K562 (cell line): ENCODE measurements at regions of chr1 and their contacts with region 1.

Region 1: DNA sequence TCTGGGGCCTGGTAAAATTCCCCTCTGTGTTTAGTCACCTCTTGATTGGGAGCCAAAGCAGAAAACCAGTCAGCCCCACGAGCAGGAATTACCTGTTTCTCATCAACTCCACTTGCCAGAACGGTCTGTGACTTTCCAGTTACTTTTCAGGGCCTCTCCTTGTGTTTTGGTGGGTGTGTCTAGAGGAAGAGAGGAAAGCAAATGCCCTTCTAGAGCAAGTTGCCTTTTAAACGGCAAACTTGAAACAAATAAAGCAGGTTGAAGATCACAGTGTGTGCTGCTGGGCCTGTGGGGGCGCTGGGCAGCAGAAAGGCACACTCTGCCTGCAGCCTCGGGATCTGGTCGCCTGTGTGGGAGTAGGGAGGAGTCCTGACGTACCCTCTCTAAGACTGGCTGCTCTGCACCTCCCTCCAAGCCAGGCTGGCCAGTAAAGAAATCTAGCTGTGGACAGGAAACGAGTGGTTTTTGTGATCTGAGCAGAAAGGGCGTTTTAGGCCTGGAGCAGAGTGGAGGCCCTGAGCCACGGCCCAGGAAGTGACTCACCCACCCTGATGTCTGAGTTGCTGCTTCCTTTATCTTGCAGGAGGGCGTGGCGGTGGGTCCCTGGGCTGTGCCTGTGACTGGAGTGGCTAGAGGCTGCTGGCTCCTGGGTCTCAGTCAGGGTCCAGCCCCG is 11.1 kb upstream of the S100A11 start:
- DNase-seq: peak; percentile 85 to 97 (median 88)
- ATAC-seq: peak; percentile 96
- H3K4me3 ChIP-seq: peak overlapping the region; percentile 32
- H3K27ac ChIP-seq: peak overlapping the region; percentile 97
- H3K4me1 ChIP-seq: peaks cover 14 to 19% of the 10 kb centered on the region in 2 experiments
- H3K27me3 ChIP-seq: peaks cover 0 to 3% of the 10 kb centered on the region in 2 experiments; a peak in 1 of 5 replicates
- CTCF ChIP-seq: peak; percentile 73 to 88 (median 76)
- EP300 ChIP-seq: peak; percentile 76
- POLR2A ChIP-seq: peak; percentile 91
- RAD21 ChIP-seq: peak in 1 of 2 experiments; percentile 7; a peak in 1 of 4 replicates

Region 2: DNA sequence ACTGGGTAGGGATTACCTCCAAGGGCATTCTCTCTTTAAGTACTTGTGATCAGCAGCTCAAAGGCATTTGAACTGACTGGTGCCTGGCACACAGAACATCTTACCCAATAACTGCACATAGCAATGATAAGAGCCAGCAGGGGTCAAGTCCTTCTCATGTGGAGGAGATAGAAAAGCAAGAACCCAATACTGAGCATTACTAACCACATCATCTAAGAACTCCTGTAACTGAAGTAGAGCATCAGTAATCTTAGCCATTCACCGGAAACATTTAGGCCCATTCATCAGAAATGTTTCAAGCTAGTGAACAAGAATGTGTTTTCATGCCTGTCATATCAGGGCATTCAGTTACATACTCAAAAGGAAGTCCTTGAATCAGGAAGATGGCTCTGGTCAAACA is 105.0 kb before region 1 on chr1:
- CTCF ChIA-PET with region 1: no interaction called
- POLR2A ChIA-PET with region 1: no interaction called
- in situ Hi-C with region 1: no loop called
- intact Hi-C with region 1: no loop called
- DNase-seq: no peak
- ATAC-seq: no peak
- H3K4me3 ChIP-seq: no peak overlapping the region
- H3K27ac ChIP-seq: no peak overlapping the region
- H3K4me1 ChIP-seq: peaks cover 3 to 27% of the 10 kb centered on the region in 2 experiments; a peak in 4 of 5 replicates
- H3K27me3 ChIP-seq: no peaks in the 10 kb centered on the region; a peak in 1 of 5 replicates
- CTCF ChIP-seq: no peak
- EP300 ChIP-seq: no peak
- POLR2A ChIP-seq: no peak
- RAD21 ChIP-seq: no peak

Region 3: DNA sequence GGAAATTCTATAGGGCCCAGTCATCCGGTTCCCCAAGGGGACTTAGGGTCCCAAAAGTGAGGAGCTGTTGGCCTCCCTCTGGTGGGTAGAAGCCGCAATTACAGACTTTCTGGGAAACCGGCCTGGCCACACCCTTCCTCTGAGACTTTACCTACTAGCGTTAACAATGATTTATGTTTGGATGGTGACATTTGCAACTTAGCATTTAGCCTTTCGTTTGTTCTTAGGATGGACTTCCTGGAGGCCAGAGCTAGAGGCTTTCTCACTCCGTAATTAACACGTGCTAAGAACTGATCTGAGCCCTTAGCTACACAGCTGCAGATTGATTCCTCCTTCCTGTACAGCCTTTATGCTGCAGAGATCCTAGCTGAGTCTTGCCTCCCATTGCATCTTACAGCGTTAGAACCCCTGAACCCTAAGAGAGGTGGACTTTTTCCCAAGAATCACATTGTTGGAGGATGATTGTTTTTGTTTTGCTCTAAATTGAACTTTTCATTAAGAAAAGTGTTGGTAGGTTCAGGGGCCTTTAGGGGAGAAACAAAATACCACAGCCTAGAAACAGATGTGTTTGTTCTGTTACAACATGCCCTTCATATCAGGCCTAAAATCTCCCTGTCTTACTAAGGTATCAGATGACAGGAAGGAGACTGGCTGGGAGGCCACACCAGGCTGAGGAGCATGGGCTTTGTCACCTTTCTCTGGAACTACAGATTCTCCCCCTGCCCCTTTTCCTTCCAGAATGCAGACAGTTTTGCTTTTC is 13.0 kb before region 1 on chr1:
- CTCF ChIA-PET with region 1: no interaction called
- POLR2A ChIA-PET with region 1: interaction called, 37 read pairs
- in situ Hi-C with region 1: no loop called
- intact Hi-C with region 1: loop called (anchors 1 kb)
- DNase-seq: peak; percentile 74 to 92 (median 82)
- ATAC-seq: peak; percentile 68
- H3K4me3 ChIP-seq: peak overlapping the region; percentile 55
- H3K27ac ChIP-seq: peak overlapping the region; percentile 79
- H3K4me1 ChIP-seq: peaks cover 19 to 24% of the 10 kb centered on the region in 2 experiments
- H3K27me3 ChIP-seq: no peaks in the 10 kb centered on the region
- CTCF ChIP-seq: peak; percentile 74 to 90 (median 81)
- EP300 ChIP-seq: peak; percentile 49
- POLR2A ChIP-seq: peak; percentile 67
- RAD21 ChIP-seq: peak; percentile 32 to 46; a peak in 3 of 4 replicates

Region 4: DNA sequence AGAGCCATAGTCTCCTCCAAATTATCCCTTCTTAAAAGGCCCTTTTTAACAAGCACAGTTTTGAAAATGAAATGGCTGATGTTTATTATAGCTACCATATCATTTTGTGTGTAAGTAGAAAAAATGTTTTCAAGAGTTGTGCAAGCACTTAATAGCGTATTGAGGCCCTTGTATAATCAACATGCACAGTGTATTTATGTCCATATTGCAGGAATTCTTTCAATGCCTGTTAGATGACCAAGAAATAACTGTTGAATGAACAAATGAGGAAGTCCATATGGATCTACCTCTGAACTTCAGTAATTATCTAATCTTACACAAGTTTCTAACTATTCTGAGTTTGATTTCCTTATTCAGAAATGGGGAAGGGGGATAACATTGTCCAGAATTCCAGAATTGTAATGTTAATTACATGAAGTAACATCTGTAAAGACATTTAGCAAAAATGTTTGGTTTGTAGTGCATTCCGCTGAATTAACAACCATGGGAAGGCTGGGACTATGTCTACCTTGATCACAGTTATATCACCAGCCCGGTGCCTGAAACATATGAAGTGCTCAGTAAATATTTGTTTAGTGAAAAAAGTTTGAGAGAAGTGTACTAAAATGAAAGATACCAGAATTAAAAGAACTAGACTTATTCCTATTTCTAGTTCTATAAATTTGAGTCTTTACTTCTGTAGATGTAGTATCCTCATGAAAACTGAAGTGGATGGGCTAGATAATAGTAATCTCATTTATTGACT is 48.4 kb after region 1 on chr1:
- CTCF ChIA-PET with region 1: no interaction called
- POLR2A ChIA-PET with region 1: no interaction called
- in situ Hi-C with region 1: no loop called
- intact Hi-C with region 1: no loop called
- DNase-seq: no peak
- ATAC-seq: no peak
- H3K4me3 ChIP-seq: no peak overlapping the region
- H3K27ac ChIP-seq: no peak overlapping the region
- H3K4me1 ChIP-seq: no peaks in the 10 kb centered on the region
- H3K27me3 ChIP-seq: peaks cover 0 to 1% of the 10 kb centered on the region in 2 experiments; a peak in 2 of 5 replicates
- CTCF ChIP-seq: no peak
- EP300 ChIP-seq: no peak
- POLR2A ChIP-seq: no peak
- RAD21 ChIP-seq: no peak

Region 5: DNA sequence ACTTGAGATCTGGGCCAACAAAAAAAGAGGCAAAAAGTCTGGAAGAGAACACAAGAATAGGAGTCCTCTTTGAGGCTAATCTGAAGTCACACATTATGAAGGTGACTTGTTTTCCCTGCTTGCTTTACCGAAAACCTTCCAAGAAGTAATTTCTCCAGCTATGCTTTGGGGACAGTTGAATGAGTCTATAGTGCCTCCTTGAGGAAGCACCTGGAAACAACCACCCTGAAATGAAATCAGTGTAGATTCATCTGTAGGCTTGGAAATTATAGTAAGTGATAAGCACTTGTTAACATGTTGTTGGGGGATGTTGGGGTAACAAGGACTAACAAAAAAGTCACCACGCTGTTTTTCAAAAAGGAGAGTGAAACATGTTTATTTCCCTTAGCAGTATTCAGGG is 134.6 kb after region 1 on chr1:
- CTCF ChIA-PET with region 1: interaction called, 38 read pairs
- POLR2A ChIA-PET with region 1: no interaction called
- in situ Hi-C with region 1: loop called (anchors 5 kb)
- intact Hi-C with region 1: loop called (anchors 1 kb)
- DNase-seq: peak in 1 of 4 experiments; percentile 14
- ATAC-seq: peak; percentile 41; the same call in 1 of the 3 replicates
- H3K4me3 ChIP-seq: no peak overlapping the region
- H3K27ac ChIP-seq: no peak overlapping the region
- H3K4me1 ChIP-seq: no peaks in the 10 kb centered on the region
- H3K27me3 ChIP-seq: no peaks in the 10 kb centered on the region
- CTCF ChIP-seq: peak; percentile 55 to 76 (median 62); a peak in 5 of 6 replicates
- EP300 ChIP-seq: no peak
- POLR2A ChIP-seq: no peak
- RAD21 ChIP-seq: peak; percentile 88 to 90

Region 6: DNA sequence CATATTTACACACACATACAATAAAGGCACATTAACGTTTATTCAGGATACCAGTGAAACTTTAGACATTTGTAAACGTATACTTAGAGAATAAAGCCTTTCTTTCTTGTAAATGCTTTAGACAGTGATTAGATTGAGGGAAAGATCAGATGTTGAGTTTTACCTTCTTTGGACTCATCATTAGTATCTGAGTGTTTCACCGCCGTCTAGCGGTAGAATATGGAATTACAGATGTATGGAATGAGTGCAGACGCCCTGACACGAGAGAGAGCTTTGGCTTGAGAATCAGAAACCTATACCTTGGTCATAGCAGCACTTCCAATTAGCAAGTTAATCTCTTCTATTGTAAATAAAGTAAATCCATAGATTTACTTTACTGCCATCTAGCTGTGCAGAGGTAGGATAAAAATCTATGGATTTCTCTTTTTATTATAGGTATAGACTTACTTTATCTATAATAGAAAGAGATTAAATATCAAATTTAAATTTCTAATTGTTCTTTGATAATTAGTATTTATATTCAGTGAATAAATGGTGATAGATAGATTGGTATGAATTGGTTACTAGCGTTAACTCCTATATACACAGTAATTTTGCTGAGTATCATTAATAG is 299.4 kb after region 1 on chr1:
- CTCF ChIA-PET with region 1: interaction called, 4 read pairs
- POLR2A ChIA-PET with region 1: no interaction called
- in situ Hi-C with region 1: no loop called
- intact Hi-C with region 1: loop called (anchors 10 kb)
- DNase-seq: peak; percentile 35 to 70 (median 56)
- ATAC-seq: peak; percentile 77
- H3K4me3 ChIP-seq: no peak overlapping the region
- H3K27ac ChIP-seq: no peak overlapping the region
- H3K4me1 ChIP-seq: no peaks in the 10 kb centered on the region
- H3K27me3 ChIP-seq: no peaks in the 10 kb centered on the region
- CTCF ChIP-seq: peak; percentile 61 to 80 (median 69)
- EP300 ChIP-seq: no peak
- POLR2A ChIP-seq: no peak
- RAD21 ChIP-seq: peak; percentile 22 to 61; a peak in 3 of 4 replicates

Region 7: GRCh38 chr1:152459596-152460528 is 412.0 kb after region 1 on chr1:
- CTCF ChIA-PET with region 1: interaction called, 4 read pairs
- POLR2A ChIA-PET with region 1: no interaction called
- in situ Hi-C with region 1: no loop called
- intact Hi-C with region 1: loop called (anchors 2 kb)
- DNase-seq: peak; percentile 38 to 72 (median 62)
- ATAC-seq: peak; percentile 90
- H3K4me3 ChIP-seq: no peak overlapping the region
- H3K27ac ChIP-seq: no peak overlapping the region
- H3K4me1 ChIP-seq: peaks cover 0 to 5% of the 10 kb centered on the region in 2 experiments; a peak in 1 of 5 replicates
- H3K27me3 ChIP-seq: no peaks in the 10 kb centered on the region
- CTCF ChIP-seq: peak; percentile 70 to 80 (median 72)
- EP300 ChIP-seq: no peak
- POLR2A ChIP-seq: no peak
- RAD21 ChIP-seq: peak in 1 of 2 experiments; percentile 24; a peak in 1 of 4 replicates